CD4-positive, alpha-beta T cell (primary cell): ENCODE measurements at regions of chr1 and their contacts with region 1.

Region 1: GRCh38 chr1:113904674-113905434 is at the starts of genes AP4B1 and DCLRE1B:
- DNase-seq: peak; percentile 89 to 100 (median 94)
- ATAC-seq: peak; percentile 92
- H3K4me3 ChIP-seq: peak within 1 kb of the TSS; percentile 96
- H3K4me3 Mint-ChIP-seq: peak within 1 kb of the TSS; percentile 99
- H3K27ac ChIP-seq: peak within 1 kb of the TSS; percentile 86 to 89
- H3K27ac Mint-ChIP-seq: peak within 1 kb of the TSS; percentile 98
- H3K4me1 ChIP-seq: peaks cover 46% of the 10 kb centered on the region
- H3K4me1 Mint-ChIP-seq: peaks cover 52% of the 10 kb centered on the region
- H3K27me3 ChIP-seq: no peaks in the 10 kb centered on the region
- H3K27me3 Mint-ChIP-seq: no peaks in the 10 kb centered on the region
- CTCF ChIP-seq: peak; percentile 73
- total RNA-seq, gene AP4B1: 44.1 to 48.0 TPM
- total RNA-seq, gene DCLRE1B: 6.4 to 6.8 TPM

Region 2: GRCh38 chr1:113871597-113872113 is 33.2 kb before region 1 on chr1 and contains the start of gene PTPN22:
- CTCF ChIA-PET with region 1: interaction called, 6 read pairs
- POLR2A ChIA-PET with region 1: interaction called, 12 read pairs
- intact Hi-C with region 1: loop called (anchors 1 kb)
- DNase-seq: peak; percentile 65 to 95 (median 75)
- ATAC-seq: peak; percentile 92
- H3K4me3 ChIP-seq: peak within 1 kb of the TSS; percentile 55
- H3K4me3 Mint-ChIP-seq: peak within 1 kb of the TSS; percentile 90
- H3K27ac ChIP-seq: peak within 1 kb of the TSS; percentile 75 to 78
- H3K27ac Mint-ChIP-seq: peak within 1 kb of the TSS; percentile 94
- H3K4me1 ChIP-seq: peaks cover 38% of the 10 kb centered on the region
- H3K4me1 Mint-ChIP-seq: peaks cover 75% of the 10 kb centered on the region
- H3K27me3 ChIP-seq: no peaks in the 10 kb centered on the region
- H3K27me3 Mint-ChIP-seq: no peaks in the 10 kb centered on the region
- CTCF ChIP-seq: no peak
- total RNA-seq, gene PTPN22: 28.3 to 30.2 TPM

Region 3: DNA sequence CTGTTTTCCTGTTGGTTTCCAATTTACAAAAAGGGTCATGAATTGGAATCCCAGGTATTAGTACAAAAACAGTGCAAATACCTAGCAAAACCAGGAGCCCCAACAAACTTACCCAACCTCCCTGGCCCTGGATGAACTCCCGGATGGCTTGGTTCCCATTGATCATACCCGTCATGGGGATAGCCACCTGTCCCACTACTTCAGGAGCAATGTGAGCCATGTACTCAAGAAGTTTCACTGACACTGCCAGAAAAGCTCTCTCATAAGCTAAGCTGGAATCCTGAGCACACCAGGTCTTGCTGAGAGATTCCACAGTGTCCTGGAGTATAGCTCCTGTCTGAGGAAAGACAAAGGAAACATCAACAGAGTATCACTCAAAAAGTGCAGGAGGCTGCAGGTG is 23.2 kb before region 1 on chr1:
- CTCF ChIA-PET with region 1: interaction called, 8 read pairs
- POLR2A ChIA-PET with region 1: interaction called, 21 read pairs
- intact Hi-C with region 1: no loop called
- DNase-seq: no peak
- ATAC-seq: no peak
- H3K4me3 ChIP-seq: no peak overlapping the region
- H3K4me3 Mint-ChIP-seq: no peak overlapping the region
- H3K27ac ChIP-seq: no peak overlapping the region
- H3K27ac Mint-ChIP-seq: no peak overlapping the region
- H3K4me1 ChIP-seq: peaks cover 11% of the 10 kb centered on the region
- H3K4me1 Mint-ChIP-seq: peaks cover 36% of the 10 kb centered on the region
- H3K27me3 ChIP-seq: no peaks in the 10 kb centered on the region
- H3K27me3 Mint-ChIP-seq: no peaks in the 10 kb centered on the region
- CTCF ChIP-seq: no peak

Region 4: DNA sequence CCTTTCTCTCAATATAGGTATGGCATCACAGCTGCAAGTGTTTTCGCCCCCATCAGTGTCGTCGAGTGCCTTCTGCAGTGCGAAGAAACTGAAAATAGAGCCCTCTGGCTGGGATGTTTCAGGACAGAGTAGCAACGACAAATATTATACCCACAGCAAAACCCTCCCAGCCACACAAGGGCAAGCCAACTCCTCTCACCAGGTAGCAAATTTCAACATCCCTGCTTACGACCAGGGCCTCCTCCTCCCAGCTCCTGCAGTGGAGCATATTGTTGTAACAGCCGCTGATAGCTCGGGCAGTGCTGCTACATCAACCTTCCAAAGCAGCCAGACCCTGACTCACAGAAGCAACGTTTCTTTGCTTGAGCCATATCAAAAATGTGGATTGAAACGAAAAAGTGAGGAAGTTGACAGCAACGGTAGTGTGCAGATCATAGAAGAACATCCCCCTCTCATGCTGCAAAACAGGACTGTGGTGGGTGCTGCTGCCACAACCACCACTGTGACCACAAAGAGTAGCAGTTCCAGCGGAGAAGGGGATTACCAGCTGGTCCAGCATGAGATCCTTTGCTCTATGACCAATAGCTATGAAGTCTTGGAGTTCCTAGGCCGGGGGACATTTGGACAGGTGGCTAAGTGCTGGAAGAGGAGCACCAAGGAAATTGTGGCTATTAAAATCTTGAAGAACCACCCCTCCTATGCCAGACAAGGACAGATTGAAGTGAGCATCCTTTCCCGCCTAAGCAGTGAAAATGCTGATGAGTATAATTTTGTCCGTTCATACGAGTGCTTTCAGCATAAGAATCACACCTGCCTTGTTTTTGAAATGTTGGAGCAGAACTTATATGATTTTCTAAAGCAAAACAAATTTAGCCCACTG is 35.8 kb after region 1 on chr1:
- CTCF ChIA-PET with region 1: interaction called, 3 read pairs
- POLR2A ChIA-PET with region 1: interaction called, 16 read pairs
- intact Hi-C with region 1: no loop called
- DNase-seq: peak in 6 of 14 experiments; percentile 17 to 80 (median 34)
- ATAC-seq: peak; percentile 45
- H3K4me3 ChIP-seq: peak overlapping the region; percentile 27
- H3K4me3 Mint-ChIP-seq: peak overlapping the region; percentile 82
- H3K27ac ChIP-seq: peak overlapping the region; percentile 33 to 45
- H3K27ac Mint-ChIP-seq: peak overlapping the region; percentile 78
- H3K4me1 ChIP-seq: peaks cover 57% of the 10 kb centered on the region
- H3K4me1 Mint-ChIP-seq: peaks cover 71% of the 10 kb centered on the region
- H3K27me3 ChIP-seq: no peaks in the 10 kb centered on the region
- H3K27me3 Mint-ChIP-seq: no peaks in the 10 kb centered on the region
- CTCF ChIP-seq: no peak

Region 5: DNA sequence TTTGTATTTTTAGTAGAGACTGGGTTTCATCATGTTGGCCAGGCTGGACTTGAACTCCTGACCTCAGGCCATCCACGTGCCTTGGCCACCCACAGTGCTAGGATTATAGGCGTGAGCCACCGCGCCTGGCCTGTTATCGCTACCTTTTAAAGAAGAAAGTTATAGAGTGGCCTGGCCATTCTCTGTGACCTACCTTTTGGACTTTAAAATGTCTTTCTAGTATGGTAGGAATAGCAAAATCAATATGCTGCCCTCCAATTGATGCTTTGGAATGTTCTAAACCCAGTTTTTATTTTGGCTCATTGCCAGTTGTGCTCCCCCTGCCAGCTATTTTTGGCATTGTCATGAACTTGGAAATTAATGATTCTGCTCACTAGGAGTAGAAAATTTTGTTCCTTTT is 44.2 kb after region 1 on chr1:
- CTCF ChIA-PET with region 1: interaction called, 5 read pairs
- POLR2A ChIA-PET with region 1: interaction called, 31 read pairs
- intact Hi-C with region 1: no loop called
- DNase-seq: peak in 2 of 14 experiments; percentile 58 to 63
- ATAC-seq: no peak
- H3K4me3 ChIP-seq: no peak overlapping the region
- H3K4me3 Mint-ChIP-seq: peak overlapping the region; percentile 51
- H3K27ac ChIP-seq: peak overlapping the region; percentile 60 to 66
- H3K27ac Mint-ChIP-seq: peak overlapping the region; percentile 89
- H3K4me1 ChIP-seq: peaks cover 50% of the 10 kb centered on the region
- H3K4me1 Mint-ChIP-seq: peaks cover 92% of the 10 kb centered on the region
- H3K27me3 ChIP-seq: no peaks in the 10 kb centered on the region
- H3K27me3 Mint-ChIP-seq: no peaks in the 10 kb centered on the region
- CTCF ChIP-seq: peak; percentile 43

Region 6: DNA sequence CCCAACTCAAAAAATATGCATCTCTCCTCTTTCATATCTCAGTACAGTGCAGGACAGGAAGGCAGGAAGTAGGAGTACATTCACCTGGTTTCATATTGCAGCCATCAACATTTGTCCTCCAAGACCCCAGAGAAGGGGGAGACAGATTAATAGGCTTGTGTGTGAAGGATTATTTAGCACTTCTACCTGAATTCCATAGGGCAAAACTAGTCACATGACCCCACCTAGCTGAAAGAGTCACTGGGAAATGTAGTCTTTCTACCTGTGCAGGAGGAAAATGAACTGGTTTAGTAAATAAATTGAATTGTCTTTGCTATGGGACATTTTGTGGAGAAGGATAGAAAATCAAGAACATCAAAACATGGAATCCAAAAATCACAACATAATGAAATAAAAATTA is 620.1 kb after region 1 on chr1:
- CTCF ChIA-PET with region 1: no interaction called
- POLR2A ChIA-PET with region 1: no interaction called
- intact Hi-C with region 1: no loop called
- DNase-seq: peak in 1 of 14 experiments; percentile 18
- ATAC-seq: peak; percentile 41
- H3K4me3 ChIP-seq: no peak overlapping the region
- H3K4me3 Mint-ChIP-seq: no peak overlapping the region
- H3K27ac ChIP-seq: no peak overlapping the region
- H3K27ac Mint-ChIP-seq: no peak overlapping the region
- H3K4me1 ChIP-seq: no peaks in the 10 kb centered on the region
- H3K4me1 Mint-ChIP-seq: no peaks in the 10 kb centered on the region
- H3K27me3 ChIP-seq: peaks cover 0 to 3% of the 10 kb centered on the region in 2 experiments
- H3K27me3 Mint-ChIP-seq: peaks cover under 1% of the 10 kb centered on the region
- CTCF ChIP-seq: no peak